ENCODE measurements at regions of chr10 and their contacts with region 1.

Region 1: GRCh38 chr10:119199231-119199992 is 8.0 kb upstream of the GRK5 start:
- DNase-seq: no peak
- ATAC-seq: peak; percentile 88
- H3K4me3 Mint-ChIP-seq: no peak overlapping the region
- H3K27ac Mint-ChIP-seq: no peak overlapping the region
- H3K4me1 Mint-ChIP-seq: peaks cover 3% of the 10 kb centered on the region
- H3K27me3 Mint-ChIP-seq: peaks cover 3% of the 10 kb centered on the region
- CTCF ChIP-seq: no peak

Region 2: DNA sequence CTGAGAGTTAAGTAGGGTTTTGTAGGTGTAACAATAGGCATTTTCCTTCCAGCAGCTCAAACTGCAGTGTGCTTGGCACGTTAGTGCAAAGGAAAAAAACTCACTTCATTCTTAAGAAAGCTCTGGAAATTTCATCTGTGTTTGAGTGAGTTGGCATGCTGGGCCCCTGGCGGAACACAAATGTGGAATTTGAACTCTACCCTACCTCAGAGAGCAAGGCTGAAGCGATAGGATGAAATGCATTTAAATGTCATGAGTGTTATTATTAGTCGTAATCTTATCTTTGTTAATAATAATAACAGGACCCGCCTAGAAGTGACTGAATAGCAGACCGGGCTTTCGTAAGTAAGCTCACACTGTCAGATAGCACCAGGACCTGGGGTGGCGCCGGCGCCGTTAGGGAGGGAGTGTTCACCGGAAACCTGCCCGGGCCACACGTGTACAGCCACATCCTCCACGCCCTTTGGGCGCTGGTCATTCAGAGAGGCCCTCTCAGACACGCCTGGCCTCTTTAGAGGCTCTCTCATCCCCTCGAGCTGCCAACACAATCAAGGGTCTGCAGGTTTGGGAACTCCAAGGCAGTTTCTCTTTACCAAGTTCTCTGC is 71.5 kb after region 1 on chr10:
- CTCF ChIA-PET with region 1: interaction called, 12 read pairs
- POLR2A ChIA-PET with region 1: no interaction called
- intact Hi-C with region 1: no loop called
- DNase-seq: peak; percentile 45
- ATAC-seq: peak; percentile 49
- H3K4me3 Mint-ChIP-seq: peak overlapping the region; percentile 69
- H3K27ac Mint-ChIP-seq: peak overlapping the region; percentile 96
- H3K4me1 Mint-ChIP-seq: peaks cover 87% of the 10 kb centered on the region
- H3K27me3 Mint-ChIP-seq: no peaks in the 10 kb centered on the region
- CTCF ChIP-seq: no peak

Region 3: GRCh38 chr10:119416855-119417254 is 217.4 kb after region 1 on chr10:
- CTCF ChIA-PET with region 1: interaction called, 44 read pairs
- POLR2A ChIA-PET with region 1: interaction called, 3 read pairs
- intact Hi-C with region 1: loop called (anchors 1 kb)
- DNase-seq: peak; percentile 57
- ATAC-seq: peak; percentile 92
- H3K4me3 Mint-ChIP-seq: no peak overlapping the region
- H3K27ac Mint-ChIP-seq: no peak overlapping the region
- H3K4me1 Mint-ChIP-seq: peaks cover 2% of the 10 kb centered on the region
- H3K27me3 Mint-ChIP-seq: no peaks in the 10 kb centered on the region
- CTCF ChIP-seq: peak; percentile 22

Region 4: DNA sequence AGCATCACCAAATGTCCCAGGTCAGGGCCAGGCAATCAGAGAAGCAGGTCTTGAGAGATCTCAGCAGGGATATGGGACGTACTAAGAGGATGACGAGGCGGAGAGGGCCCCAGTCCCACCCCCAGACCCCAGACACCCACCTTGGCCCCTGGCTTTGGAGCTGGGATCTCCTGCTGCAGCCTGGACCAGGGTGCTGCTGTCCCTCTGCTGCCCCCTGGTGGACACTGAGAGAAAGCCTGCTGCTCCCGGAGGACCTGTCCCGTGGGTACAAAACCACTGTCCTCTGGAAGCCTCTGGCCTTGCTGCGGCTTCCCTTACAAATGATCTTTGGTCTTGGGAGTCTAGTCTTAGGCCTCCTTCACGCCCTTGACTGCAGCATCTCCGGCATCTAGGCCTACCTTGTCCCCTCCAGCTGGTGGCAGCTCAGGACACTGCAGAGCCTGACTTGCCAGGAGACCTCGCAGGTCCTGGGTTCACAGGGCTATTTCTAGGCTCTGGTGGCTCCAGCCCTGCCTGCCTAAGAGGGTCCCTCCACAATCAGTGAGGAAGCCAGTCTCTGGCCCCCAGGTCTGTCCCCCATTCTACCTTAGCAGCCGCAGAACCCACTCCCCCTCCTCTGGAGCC is 246.0 kb after region 1 on chr10:
- CTCF ChIA-PET with region 1: interaction called, 36 read pairs
- POLR2A ChIA-PET with region 1: interaction called, 6 read pairs
- intact Hi-C with region 1: loop called (anchors 1 kb)
- DNase-seq: peak; percentile 74
- ATAC-seq: peak; percentile 70
- H3K4me3 Mint-ChIP-seq: no peak overlapping the region
- H3K27ac Mint-ChIP-seq: peak overlapping the region; percentile 61
- H3K4me1 Mint-ChIP-seq: peaks cover 31% of the 10 kb centered on the region
- H3K27me3 Mint-ChIP-seq: no peaks in the 10 kb centered on the region
- CTCF ChIP-seq: peak; percentile 57

Measured in activated B cell treated with CpG ODN at 0.5 μM for 24 hours (primary cell).